ENCODE measurements at regions of chr12 and their contacts with region 1.

Region 1: GRCh38 chr12:123232807-123233543 is at the starts of genes MPHOSPH9 and MTRFR:
- DNase-seq: peak; percentile 100
- H3K4me3 Mint-ChIP-seq: peak within 1 kb of the TSS; percentile 99
- H3K27ac Mint-ChIP-seq: peak within 1 kb of the TSS; percentile 96
- H3K4me1 Mint-ChIP-seq: peaks cover 60% of the 10 kb centered on the region
- H3K27me3 Mint-ChIP-seq: peaks cover 3% of the 10 kb centered on the region
- total RNA-seq, gene MPHOSPH9: 88.8 to 97.6 TPM
- total RNA-seq, gene MTRFR: 28.4 to 28.8 TPM

Region 2: GRCh38 chr12:122888232-122888867 is 344.6 kb before region 1 on chr12:
- CTCF ChIA-PET with region 1: no interaction called
- POLR2A ChIA-PET with region 1: no interaction called
- intact Hi-C with region 1: loop called (anchors 10 kb)
- DNase-seq: peak; percentile 65
- H3K4me3 Mint-ChIP-seq: peak overlapping the region; percentile 70
- H3K27ac Mint-ChIP-seq: peak overlapping the region; percentile 88
- H3K4me1 Mint-ChIP-seq: peaks cover 77% of the 10 kb centered on the region
- H3K27me3 Mint-ChIP-seq: peaks cover 5% of the 10 kb centered on the region

Region 3: DNA sequence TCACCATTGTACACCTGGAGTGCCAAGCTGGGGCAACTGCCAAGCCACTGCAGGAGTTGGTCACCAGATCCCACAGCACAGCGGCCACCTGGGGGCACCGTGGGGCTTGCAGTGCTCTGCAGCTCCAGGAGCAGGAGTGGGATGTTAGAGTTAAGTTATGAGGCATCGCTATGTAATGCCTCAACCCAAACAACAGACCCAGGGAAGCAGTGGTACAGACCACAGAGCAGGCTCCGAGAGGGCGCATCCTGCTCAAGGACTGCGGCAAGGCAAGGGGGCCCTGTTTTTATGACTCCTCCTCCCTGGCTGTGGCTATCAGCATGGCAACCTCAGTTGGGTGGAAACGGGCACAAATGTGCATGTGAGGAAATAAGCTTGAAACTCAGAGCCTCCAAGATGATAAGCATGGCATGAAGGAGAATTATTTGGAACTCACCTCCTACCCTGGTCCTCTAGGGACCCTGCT is 189.4 kb before region 1 on chr12:
- CTCF ChIA-PET with region 1: interaction called, 70 read pairs
- POLR2A ChIA-PET with region 1: interaction called, 8 read pairs
- intact Hi-C with region 1: loop called (anchors 1 kb)
- DNase-seq: peak; percentile 85
- H3K4me3 Mint-ChIP-seq: no peak overlapping the region
- H3K27ac Mint-ChIP-seq: no peak overlapping the region
- H3K4me1 Mint-ChIP-seq: peaks cover 21% of the 10 kb centered on the region
- H3K27me3 Mint-ChIP-seq: no peaks in the 10 kb centered on the region

Region 4: GRCh38 chr12:123150744-123151456 is 82.1 kb before region 1 on chr12 and contains the start of gene PITPNM2:
- CTCF ChIA-PET with region 1: interaction called, 15 read pairs
- POLR2A ChIA-PET with region 1: interaction called, 5 read pairs
- intact Hi-C with region 1: loop called (anchors 2 kb)
- DNase-seq: peak; percentile 66
- H3K4me3 Mint-ChIP-seq: peak within 1 kb of the TSS; percentile 75
- H3K27ac Mint-ChIP-seq: no peak within 1 kb of the TSS
- H3K4me1 Mint-ChIP-seq: peaks cover 27% of the 10 kb centered on the region
- H3K27me3 Mint-ChIP-seq: peaks cover 4% of the 10 kb centered on the region
- total RNA-seq, gene PITPNM2: 5.9 to 6.5 TPM

Region 5: GRCh38 chr12:123271001-123271729 is 38.2 kb after region 1 on chr12:
- CTCF ChIA-PET with region 1: interaction called, 4 read pairs
- POLR2A ChIA-PET with region 1: interaction called, 12 read pairs
- intact Hi-C with region 1: loop called (anchors 2 kb)
- DNase-seq: peak; percentile 83
- H3K4me3 Mint-ChIP-seq: no peak overlapping the region
- H3K27ac Mint-ChIP-seq: no peak overlapping the region
- H3K4me1 Mint-ChIP-seq: peaks cover 19% of the 10 kb centered on the region
- H3K27me3 Mint-ChIP-seq: no peaks in the 10 kb centered on the region

Region 6: GRCh38 chr12:123388177-123388947 is 155.4 kb after region 1 on chr12:
- CTCF ChIA-PET with region 1: interaction called, 4 read pairs
- POLR2A ChIA-PET with region 1: interaction called, 5 read pairs
- intact Hi-C with region 1: loop called (anchors 5 kb)
- DNase-seq: peak; percentile 86
- H3K4me3 Mint-ChIP-seq: peak overlapping the region; percentile 80
- H3K27ac Mint-ChIP-seq: peak overlapping the region; percentile 88
- H3K4me1 Mint-ChIP-seq: peaks cover 39% of the 10 kb centered on the region
- H3K27me3 Mint-ChIP-seq: no peaks in the 10 kb centered on the region

Region 7: GRCh38 chr12:123633379-123634141 is 400.6 kb after region 1 on chr12 and contains the starts of genes EIF2B1 and GTF2H3:
- CTCF ChIA-PET with region 1: no interaction called
- POLR2A ChIA-PET with region 1: no interaction called
- intact Hi-C with region 1: loop called (anchors 1 kb)
- DNase-seq: peak; percentile 99
- H3K4me3 Mint-ChIP-seq: peak within 1 kb of the TSS; percentile 97
- H3K27ac Mint-ChIP-seq: peak within 1 kb of the TSS; percentile 96
- H3K4me1 Mint-ChIP-seq: peaks cover 28% of the 10 kb centered on the region
- H3K27me3 Mint-ChIP-seq: no peaks in the 10 kb centered on the region
- total RNA-seq, gene EIF2B1: 51.7 to 61.9 TPM
- total RNA-seq, gene GTF2H3: 57.2 to 58.4 TPM

Region 8: DNA sequence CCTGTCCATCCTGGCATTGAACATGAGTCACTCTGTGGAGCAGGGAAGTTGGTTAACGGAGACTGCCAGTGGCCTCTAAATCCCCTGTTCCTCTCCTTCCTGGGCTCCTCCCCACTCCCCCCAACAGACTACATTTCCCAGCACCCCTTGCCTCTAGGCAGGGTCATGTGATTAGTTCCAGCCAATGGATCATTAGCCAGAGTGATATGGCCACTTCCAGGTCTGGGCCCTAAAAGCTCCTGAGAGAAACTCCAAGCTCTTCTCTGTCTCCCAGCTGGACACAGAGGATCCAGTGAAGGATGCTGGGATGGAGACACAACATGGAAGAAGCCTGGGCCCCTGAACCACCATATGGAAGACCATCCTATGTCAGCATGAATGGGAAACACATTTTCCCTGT is 1007.5 kb after region 1 on chr12:
- CTCF ChIA-PET with region 1: no interaction called
- POLR2A ChIA-PET with region 1: no interaction called
- intact Hi-C with region 1: no loop called
- DNase-seq: no peak
- H3K4me3 Mint-ChIP-seq: no peak overlapping the region
- H3K27ac Mint-ChIP-seq: no peak overlapping the region
- H3K4me1 Mint-ChIP-seq: no peaks in the 10 kb centered on the region
- H3K27me3 Mint-ChIP-seq: peaks cover 7% of the 10 kb centered on the region

Measured in activated CD4-positive, alpha-beta memory T cell treated with anti-CD3 and anti-CD28 coated beads for 36 hours (primary cell).